ENCODE measurements at regions of chr19 and their contacts with region 1.

Region 1: GRCh38 chr19:4791170-4792018 is at the start of gene FEM1A:
- DNase-seq: peak; percentile 100
- H3K4me3 Mint-ChIP-seq: peak within 1 kb of the TSS; percentile 80
- H3K27ac Mint-ChIP-seq: peak within 1 kb of the TSS; percentile 88
- H3K4me1 Mint-ChIP-seq: peaks cover 39% of the 10 kb centered on the region
- H3K27me3 Mint-ChIP-seq: no peaks in the 10 kb centered on the region
- total RNA-seq, gene FEM1A: 8.1 to 9.1 TPM

Region 2: DNA sequence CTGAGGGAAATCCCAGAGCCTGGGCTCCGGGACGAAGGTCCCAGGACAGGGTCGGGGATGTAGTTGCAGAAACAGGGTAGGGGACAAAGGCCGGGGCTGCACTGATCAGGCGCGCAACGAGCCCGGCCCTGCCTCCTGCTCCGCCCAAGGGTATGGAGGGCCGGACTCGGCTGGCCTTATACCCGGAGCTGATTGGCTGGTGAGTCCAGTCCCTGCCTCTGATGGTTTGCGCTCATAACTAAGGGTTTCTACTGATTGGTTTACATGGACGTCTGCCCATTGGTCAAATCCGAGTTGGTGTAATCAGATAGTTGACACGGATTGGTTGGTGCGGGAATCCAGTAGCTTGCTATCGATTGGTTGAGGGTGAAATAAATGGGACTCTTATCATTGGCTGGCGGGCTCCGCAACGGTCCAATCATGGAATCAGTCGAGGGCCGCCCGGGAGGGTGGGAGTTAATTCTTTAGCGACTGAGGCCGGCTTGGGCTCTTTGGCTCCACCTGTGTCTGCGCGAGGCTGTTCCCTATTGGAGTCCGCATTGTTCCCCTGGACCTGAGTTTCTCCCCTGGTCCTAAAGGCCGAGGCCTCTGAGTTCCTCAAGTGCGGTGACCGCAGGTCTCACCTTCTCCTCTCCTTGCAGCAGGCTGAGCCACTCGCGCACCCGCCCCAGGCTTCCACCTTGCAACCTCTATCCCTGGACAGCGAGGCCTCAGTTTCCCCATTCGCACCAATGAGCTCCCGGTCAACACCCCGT is 448.6 kb before region 1 on chr19:
- CTCF ChIA-PET with region 1: no interaction called
- intact Hi-C with region 1: loop called (anchors 2 kb)
- DNase-seq: peak; percentile 97
- H3K4me3 Mint-ChIP-seq: peak overlapping the region; percentile 94
- H3K27ac Mint-ChIP-seq: peak overlapping the region; percentile 94
- H3K4me1 Mint-ChIP-seq: peaks cover 27% of the 10 kb centered on the region
- H3K27me3 Mint-ChIP-seq: no peaks in the 10 kb centered on the region

Region 3: GRCh38 chr19:4471403-4472173 is 319.8 kb before region 1 on chr19:
- CTCF ChIA-PET with region 1: no interaction called
- intact Hi-C with region 1: loop called (anchors 1 kb)
- DNase-seq: peak; percentile 99
- H3K4me3 Mint-ChIP-seq: no peak overlapping the region
- H3K27ac Mint-ChIP-seq: no peak overlapping the region
- H3K4me1 Mint-ChIP-seq: peaks cover 21% of the 10 kb centered on the region
- H3K27me3 Mint-ChIP-seq: no peaks in the 10 kb centered on the region

Region 4: DNA sequence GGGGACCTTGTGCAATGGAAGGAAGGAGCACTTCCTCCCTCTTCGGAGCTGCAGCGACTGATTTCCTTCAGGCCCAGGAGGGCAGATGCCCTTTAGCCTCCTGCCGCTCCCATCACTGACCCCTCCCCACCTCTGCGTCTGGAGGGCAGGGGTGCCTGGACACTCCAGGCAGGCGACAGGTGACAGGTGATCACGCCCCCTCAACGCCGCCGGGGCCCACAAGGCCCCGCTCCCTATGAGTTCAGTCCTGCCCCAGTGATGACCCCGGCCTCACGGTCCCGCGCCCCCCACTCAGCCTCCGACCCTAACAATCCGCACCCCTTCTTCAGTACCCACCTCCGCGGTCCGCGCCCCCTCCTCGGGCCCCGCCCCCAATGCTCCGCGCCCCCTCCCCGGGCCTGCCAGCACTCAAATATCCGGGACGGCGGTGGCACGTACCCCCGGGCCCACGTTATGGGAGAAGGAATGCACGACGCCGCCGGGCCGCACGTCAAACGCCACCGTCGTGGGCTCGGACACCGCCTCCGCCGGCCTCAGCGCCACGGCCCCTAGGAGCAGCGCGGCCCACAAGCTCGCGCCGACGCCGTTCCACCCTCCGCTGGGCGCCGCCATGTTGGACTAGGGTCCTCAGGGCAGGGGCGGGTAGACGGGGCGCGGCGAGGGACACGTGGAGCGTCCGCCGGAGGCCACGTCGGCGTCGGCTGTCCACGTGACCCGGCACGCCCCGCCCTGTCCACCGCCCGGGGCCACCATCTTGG is 121.5 kb before region 1 on chr19 and contains the start of gene MYDGF:
- CTCF ChIA-PET with region 1: interaction called, 3 read pairs
- intact Hi-C with region 1: loop called (anchors 2 kb)
- DNase-seq: peak; percentile 94
- H3K4me3 Mint-ChIP-seq: peak within 1 kb of the TSS; percentile 86
- H3K27ac Mint-ChIP-seq: peak within 1 kb of the TSS; percentile 46
- H3K4me1 Mint-ChIP-seq: peaks cover 18% of the 10 kb centered on the region
- H3K27me3 Mint-ChIP-seq: no peaks in the 10 kb centered on the region
- total RNA-seq, gene MYDGF: 43.5 to 45.5 TPM

Region 5: GRCh38 chr19:4768934-4769777 is 22.2 kb before region 1 on chr19:
- CTCF ChIA-PET with region 1: interaction called, 3 read pairs
- intact Hi-C with region 1: loop called (anchors 1 kb)
- DNase-seq: peak; percentile 92
- H3K4me3 Mint-ChIP-seq: no peak overlapping the region
- H3K27ac Mint-ChIP-seq: no peak overlapping the region
- H3K4me1 Mint-ChIP-seq: no peaks in the 10 kb centered on the region
- H3K27me3 Mint-ChIP-seq: peaks cover 4% of the 10 kb centered on the region

Region 6: DNA sequence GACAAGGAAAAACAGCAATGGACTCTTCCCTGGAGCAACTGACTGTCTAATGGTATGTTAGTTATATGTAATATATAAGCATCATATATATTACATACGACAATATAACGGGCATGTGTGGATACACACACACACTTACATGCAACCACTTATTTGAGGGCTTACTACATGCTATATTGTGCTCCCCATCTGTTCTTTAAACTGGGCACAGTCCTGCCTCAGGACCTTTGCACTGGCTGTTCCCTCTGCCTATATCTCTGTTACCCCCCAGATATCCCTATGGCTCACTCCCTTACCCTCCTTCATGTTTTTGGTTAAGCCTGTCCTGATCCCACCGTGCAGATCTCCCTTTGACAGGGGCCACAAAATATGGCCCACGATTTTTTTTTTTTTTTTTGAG is 29.9 kb after region 1 on chr19:
- CTCF ChIA-PET with region 1: no interaction called
- intact Hi-C with region 1: no loop called
- DNase-seq: no peak
- H3K4me3 Mint-ChIP-seq: no peak overlapping the region
- H3K27ac Mint-ChIP-seq: no peak overlapping the region
- H3K4me1 Mint-ChIP-seq: no peaks in the 10 kb centered on the region
- H3K27me3 Mint-ChIP-seq: no peaks in the 10 kb centered on the region

Region 7: GRCh38 chr19:4904481-4904880 is 113.1 kb after region 1 on chr19:
- CTCF ChIA-PET with region 1: no interaction called
- intact Hi-C with region 1: no loop called
- DNase-seq: no peak
- H3K4me3 Mint-ChIP-seq: no peak overlapping the region
- H3K27ac Mint-ChIP-seq: no peak overlapping the region
- H3K4me1 Mint-ChIP-seq: peaks cover 14% of the 10 kb centered on the region
- H3K27me3 Mint-ChIP-seq: no peaks in the 10 kb centered on the region

Region 8: DNA sequence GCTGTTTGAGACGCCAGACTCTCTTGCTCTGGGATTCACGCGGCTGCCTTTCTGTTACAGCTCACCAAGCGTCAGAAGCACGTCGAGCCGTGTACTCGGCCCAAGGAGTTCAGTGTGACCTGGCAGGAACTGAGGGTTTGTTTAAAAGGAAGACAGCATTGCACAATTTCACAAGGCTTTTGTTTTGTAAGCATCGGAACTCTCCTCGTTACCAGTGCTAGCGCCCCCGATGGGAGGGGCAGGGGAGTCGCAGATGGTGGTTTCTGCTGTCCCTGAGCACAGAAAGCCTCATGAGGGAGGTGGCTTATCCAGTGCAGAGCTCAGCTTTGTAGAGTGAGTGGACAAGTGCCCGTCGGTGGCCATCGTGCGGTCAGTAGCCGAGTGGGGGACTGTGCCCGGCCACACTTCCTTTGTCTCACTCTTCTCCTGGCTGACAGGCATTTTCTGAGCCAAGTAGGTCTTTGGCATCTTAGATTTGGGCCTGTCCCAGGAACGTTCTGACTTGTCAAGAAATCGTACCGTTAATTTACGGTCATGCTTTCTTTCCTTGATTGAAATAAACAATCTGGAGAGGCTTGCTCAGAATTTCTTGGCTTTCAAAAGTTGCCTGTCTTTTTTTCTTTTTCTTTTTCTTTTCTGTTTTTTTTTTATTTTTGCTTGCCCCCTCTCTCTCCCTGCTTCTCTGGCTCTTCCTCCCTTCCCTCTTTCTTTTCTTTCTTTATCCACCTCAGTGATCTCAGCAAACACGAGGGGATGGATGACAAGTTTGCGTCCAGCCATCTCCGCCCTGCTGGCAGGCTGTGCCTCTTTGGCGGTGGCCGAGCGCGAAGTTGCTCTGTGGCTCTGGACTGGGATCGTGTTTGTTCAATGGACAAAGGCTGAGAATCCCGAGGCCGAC is 185.3 kb after region 1 on chr19:
- CTCF ChIA-PET with region 1: no interaction called
- intact Hi-C with region 1: no loop called
- DNase-seq: no peak
- H3K4me3 Mint-ChIP-seq: no peak overlapping the region
- H3K27ac Mint-ChIP-seq: no peak overlapping the region
- H3K4me1 Mint-ChIP-seq: peaks cover 19% of the 10 kb centered on the region
- H3K27me3 Mint-ChIP-seq: no peaks in the 10 kb centered on the region

Region 9: GRCh38 chr19:5790573-5791520 is 999.5 kb after region 1 on chr19 and contains the start of gene DUS3L:
- CTCF ChIA-PET with region 1: no interaction called
- intact Hi-C with region 1: loop called (anchors 1 kb)
- DNase-seq: peak; percentile 98
- H3K4me3 Mint-ChIP-seq: peak within 1 kb of the TSS; percentile 100
- H3K27ac Mint-ChIP-seq: peak within 1 kb of the TSS; percentile 100
- H3K4me1 Mint-ChIP-seq: peaks cover 13% of the 10 kb centered on the region
- H3K27me3 Mint-ChIP-seq: no peaks in the 10 kb centered on the region
- total RNA-seq, gene DUS3L: 43.1 to 45.2 TPM